ENCODE measurements at regions of chr15 and their contacts with region 1.

Region 1: DNA sequence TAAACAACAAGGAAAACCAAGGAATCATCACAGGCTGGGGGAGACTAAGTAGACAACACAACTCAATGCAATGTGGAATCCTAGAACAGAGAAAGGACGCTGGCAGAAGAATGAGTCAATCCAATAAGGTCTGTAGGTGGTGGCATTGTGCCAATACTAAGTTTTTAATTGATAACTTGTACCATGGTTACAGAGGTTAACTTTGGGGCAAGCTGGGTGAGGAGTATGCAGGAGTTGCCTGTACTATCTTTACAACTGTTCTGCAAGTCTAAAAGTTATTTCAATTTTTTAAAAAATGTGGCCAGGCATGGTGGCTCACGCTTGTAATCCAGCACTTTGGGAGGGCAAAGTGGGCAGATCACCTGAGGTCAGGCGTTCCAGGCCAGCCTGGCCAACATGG is 46.1 kb downstream of the RORA start:
- DNase-seq: no peak

Region 2: DNA sequence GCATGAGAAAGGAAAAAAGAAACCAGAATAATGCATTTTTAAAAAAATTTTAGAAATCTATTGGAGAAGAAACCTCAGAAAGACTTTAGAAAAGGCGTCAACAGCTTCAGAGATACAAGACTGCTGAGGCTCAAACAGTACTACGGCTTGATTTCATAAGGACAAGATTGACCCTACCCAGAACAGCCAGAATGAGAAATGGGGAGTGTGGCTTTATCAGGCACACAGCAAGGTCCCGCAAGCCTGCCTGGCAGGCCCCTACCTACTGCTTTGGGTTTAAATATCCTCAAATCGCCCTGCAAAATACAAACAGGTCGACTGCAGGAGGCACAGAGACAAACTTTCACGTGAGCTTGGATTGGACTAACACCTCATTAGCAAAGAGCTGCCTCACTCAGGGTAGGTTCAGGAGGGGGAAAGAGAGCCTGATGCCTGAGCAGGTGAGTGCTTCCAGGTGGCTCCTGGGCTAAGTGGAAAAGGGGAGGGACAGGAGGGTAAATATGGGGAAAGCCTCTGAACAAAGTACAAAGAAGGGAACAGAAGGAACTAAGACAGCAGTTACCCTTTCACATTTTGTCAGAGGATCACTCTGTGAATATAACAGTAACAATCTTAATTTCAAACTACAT is 41.3 kb before region 1 on chr15:
- intact Hi-C with region 1: loop called in 1 of 2 experiments (anchors 2 kb)
- DNase-seq: no peak

Measured in posterior vena cava (tissue), 2 donors.